Activated T-helper 2 cell treated with anti-CD3 and anti-CD28 coated beads, Interferon-gamma antibody, Interleukin-2, Interleukin-4, amounts not matched to agents 10 μg/mL and 5 μg/mL and 100 μg/mL, durations not matched to agents 14 hours and 24 hours and 36 hours (primary cell): ENCODE measurements at regions of chr4 and their contacts with region 1.

Region 1: DNA sequence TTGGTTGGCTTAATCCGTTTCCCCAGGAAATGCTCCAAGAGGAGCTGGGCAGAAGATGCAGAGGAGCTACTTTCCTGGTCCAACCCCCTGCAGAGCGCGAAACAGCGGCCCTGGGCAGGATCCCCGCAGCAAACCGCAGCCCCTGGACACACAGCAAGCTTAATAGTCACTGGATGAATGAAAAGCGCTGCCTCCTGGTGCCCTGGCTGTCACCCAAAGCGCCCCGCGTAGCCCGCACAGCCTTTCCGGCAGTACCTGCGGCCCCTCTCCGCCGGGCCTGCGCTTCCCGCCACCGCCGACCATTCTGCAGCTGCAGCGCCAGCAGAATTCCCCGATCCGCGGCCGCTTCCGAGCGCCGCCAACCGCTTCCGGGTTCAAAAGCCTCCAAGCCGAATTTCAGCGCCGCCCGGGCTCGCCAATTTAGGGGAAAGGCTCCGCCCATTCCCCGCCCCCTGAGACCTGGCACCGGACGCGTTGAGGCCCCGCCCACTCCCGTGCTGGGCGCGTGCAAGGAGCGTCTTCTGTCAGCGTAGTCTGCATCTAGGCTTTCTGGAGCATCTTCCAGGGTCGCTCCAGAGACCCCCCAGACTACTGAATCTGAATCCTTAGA is at the start of gene HPF1:
- DNase-seq: peak; percentile 90
- H3K4me3 Mint-ChIP-seq: peak within 1 kb of the TSS; percentile 91
- H3K27ac Mint-ChIP-seq: peak within 1 kb of the TSS; percentile 67
- H3K4me1 Mint-ChIP-seq: peaks cover 27% of the 10 kb centered on the region
- H3K27me3 Mint-ChIP-seq: peaks cover 11% of the 10 kb centered on the region
- total RNA-seq, gene HPF1: 23.6 and 24.1 TPM in 2 replicates

Region 2: GRCh38 chr4:169993531-169993930 is 235.9 kb after region 1 on chr4:
- intact Hi-C with region 1: no loop called
- DNase-seq: no peak
- H3K4me3 Mint-ChIP-seq: no peak overlapping the region
- H3K27ac Mint-ChIP-seq: no peak overlapping the region
- H3K4me1 Mint-ChIP-seq: no peaks in the 10 kb centered on the region
- H3K27me3 Mint-ChIP-seq: peaks cover 2% of the 10 kb centered on the region

Region 3: GRCh38 chr4:170027181-170027829 is 269.6 kb after region 1 on chr4:
- intact Hi-C with region 1: loop called (anchors 5 kb)
- DNase-seq: peak; percentile 83
- H3K4me3 Mint-ChIP-seq: peak overlapping the region; percentile 79
- H3K27ac Mint-ChIP-seq: peak overlapping the region; percentile 63
- H3K4me1 Mint-ChIP-seq: peaks cover 7% of the 10 kb centered on the region
- H3K27me3 Mint-ChIP-seq: peaks cover 51% of the 10 kb centered on the region